ENCODE measurements at regions of chr3 and their contacts with region 1.

Region 1: DNA sequence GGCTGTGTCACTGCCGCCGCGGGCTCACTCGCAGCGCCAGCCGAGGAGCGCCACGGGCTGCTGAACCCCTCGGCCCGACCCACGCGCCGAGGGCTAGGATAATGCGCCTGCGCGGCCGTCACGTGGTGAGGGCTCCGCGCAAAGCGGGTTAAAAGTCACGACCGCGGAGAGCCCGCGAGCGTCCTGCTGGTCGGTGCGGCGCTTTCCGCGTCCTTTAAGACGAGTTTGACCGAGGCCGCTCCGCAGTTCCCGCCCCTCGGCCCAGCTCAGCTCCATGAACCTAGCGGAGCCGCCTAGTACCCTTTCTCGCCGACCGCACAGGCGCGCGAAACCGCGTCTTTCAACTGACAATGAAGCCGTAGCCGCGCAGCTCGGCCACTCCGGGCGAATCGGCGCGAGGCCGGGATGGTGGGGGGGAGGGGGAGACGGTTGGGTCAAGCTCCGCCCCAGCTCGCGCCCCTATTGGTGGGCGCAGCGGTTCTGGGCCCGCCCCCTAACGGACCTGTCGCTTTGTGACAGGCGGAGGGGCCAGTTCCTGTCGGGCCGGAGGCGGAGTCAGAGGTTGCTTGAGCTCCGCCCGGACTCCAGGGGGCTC is 636 bp upstream of the STT3B start:
- DNase-seq: peak; percentile 98
- H3K4me3 ChIP-seq: peak overlapping the region; percentile 9 to 84
- H3K4me3 Mint-ChIP-seq: peak overlapping the region in 7 of 8 donors; percentile 92 to 99 (median 98)
- H3K27ac ChIP-seq: peak overlapping the region; percentile 88
- H3K27ac Mint-ChIP-seq: peak overlapping the region in 6 of 7 donors; percentile 97 to 99 (median 98)
- H3K4me1 ChIP-seq: peaks cover 31% of the 10 kb centered on the region
- H3K4me1 Mint-ChIP-seq: peaks cover 9 to 33% (median 16%) of the 10 kb centered on the region in 4 donors
- H3K27me3 ChIP-seq: no peaks in the 10 kb centered on the region
- H3K27me3 Mint-ChIP-seq: no peaks in the 10 kb centered on the region

Region 2: GRCh38 chr3:30606301-30607031 is 925.6 kb before region 1 on chr3 and contains the start of gene TGFBR2:
- CTCF ChIA-PET with region 1: no interaction called
- POLR2A ChIA-PET with region 1: interaction called, 15 read pairs
- intact Hi-C with region 1: loop called (anchors 2 kb)
- DNase-seq: peak; percentile 67 to 90 (median 69)
- H3K4me3 ChIP-seq: peak within 1 kb of the TSS; percentile 82 to 89
- H3K4me3 Mint-ChIP-seq: peak within 1 kb of the TSS; percentile 97 to 99 (median 99)
- H3K27ac ChIP-seq: peak within 1 kb of the TSS; percentile 85
- H3K27ac Mint-ChIP-seq: peak within 1 kb of the TSS; percentile 92 to 99 (median 98)
- H3K4me1 ChIP-seq: peaks cover 57% of the 10 kb centered on the region
- H3K4me1 Mint-ChIP-seq: peaks cover 43 to 67% (median 48%) of the 10 kb centered on the region in 4 donors
- H3K27me3 ChIP-seq: no peaks in the 10 kb centered on the region
- H3K27me3 Mint-ChIP-seq: no peaks in the 10 kb centered on the region
- total RNA-seq, gene TGFBR2: 110 TPM

Region 3: GRCh38 chr3:30970183-30970582 is 561.9 kb before region 1 on chr3:
- CTCF ChIA-PET with region 1: no interaction called
- POLR2A ChIA-PET with region 1: no interaction called
- intact Hi-C with region 1: loop called (anchors 10 kb)
- DNase-seq: peak in 4 of 5 donors; percentile 6 to 23 (median 20)
- H3K4me3 ChIP-seq: no peak overlapping the region
- H3K4me3 Mint-ChIP-seq: no peak overlapping the region
- H3K27ac ChIP-seq: no peak overlapping the region
- H3K27ac Mint-ChIP-seq: no peak overlapping the region
- H3K4me1 ChIP-seq: no peaks in the 10 kb centered on the region
- H3K4me1 Mint-ChIP-seq: peaks cover 2 to 7% (median 5%) of the 10 kb centered on the region in 4 donors
- H3K27me3 ChIP-seq: no peaks in the 10 kb centered on the region
- H3K27me3 Mint-ChIP-seq: peaks cover 2 to 5% of the 10 kb centered on the region in 2 donors

Region 4: GRCh38 chr3:31232055-31233025 is 299.7 kb before region 1 on chr3:
- CTCF ChIA-PET with region 1: interaction called, 22 read pairs
- POLR2A ChIA-PET with region 1: interaction called, 181 read pairs
- intact Hi-C with region 1: no loop called
- DNase-seq: no peak
- H3K4me3 ChIP-seq: no peak overlapping the region
- H3K4me3 Mint-ChIP-seq: peak overlapping the region in 7 of 8 donors; percentile 2 to 77 (median 54)
- H3K27ac ChIP-seq: no peak overlapping the region
- H3K27ac Mint-ChIP-seq: peak overlapping the region; percentile 72 to 92 (median 83)
- H3K4me1 ChIP-seq: peaks cover 80% of the 10 kb centered on the region
- H3K4me1 Mint-ChIP-seq: peaks cover 62 to 85% (median 74%) of the 10 kb centered on the region in 4 donors
- H3K27me3 ChIP-seq: no peaks in the 10 kb centered on the region
- H3K27me3 Mint-ChIP-seq: no peaks in the 10 kb centered on the region

Region 5: GRCh38 chr3:31503456-31503855 is 28.6 kb before region 1 on chr3:
- CTCF ChIA-PET with region 1: interaction called, 5 read pairs
- POLR2A ChIA-PET with region 1: interaction called, 15 read pairs
- intact Hi-C with region 1: no loop called
- DNase-seq: no peak
- H3K4me3 ChIP-seq: no peak overlapping the region
- H3K4me3 Mint-ChIP-seq: no peak overlapping the region
- H3K27ac ChIP-seq: no peak overlapping the region
- H3K27ac Mint-ChIP-seq: no peak overlapping the region
- H3K4me1 ChIP-seq: peaks cover 42% of the 10 kb centered on the region
- H3K4me1 Mint-ChIP-seq: peaks cover 34 to 54% (median 39%) of the 10 kb centered on the region in 4 donors
- H3K27me3 ChIP-seq: no peaks in the 10 kb centered on the region
- H3K27me3 Mint-ChIP-seq: no peaks in the 10 kb centered on the region

Region 6: GRCh38 chr3:31567036-31567435 is 34.9 kb after region 1 on chr3:
- CTCF ChIA-PET with region 1: interaction called, 7 read pairs
- POLR2A ChIA-PET with region 1: interaction called, 14 read pairs
- intact Hi-C with region 1: no loop called
- DNase-seq: peak in 3 of 5 donors; percentile 19 to 43 (median 25)
- H3K4me3 ChIP-seq: no peak overlapping the region
- H3K4me3 Mint-ChIP-seq: peak overlapping the region in 7 of 8 donors; percentile 1 to 72 (median 54)
- H3K27ac ChIP-seq: no peak overlapping the region
- H3K27ac Mint-ChIP-seq: peak overlapping the region in 4 of 7 donors; percentile 11 to 61 (median 38)
- H3K4me1 ChIP-seq: peaks cover 92% of the 10 kb centered on the region
- H3K4me1 Mint-ChIP-seq: peaks cover 72 to 90% (median 83%) of the 10 kb centered on the region in 4 donors
- H3K27me3 ChIP-seq: no peaks in the 10 kb centered on the region
- H3K27me3 Mint-ChIP-seq: no peaks in the 10 kb centered on the region

Region 7: GRCh38 chr3:31858439-31858838 is 326.4 kb after region 1 on chr3:
- CTCF ChIA-PET with region 1: no interaction called
- POLR2A ChIA-PET with region 1: no interaction called
- intact Hi-C with region 1: no loop called
- DNase-seq: no peak
- H3K4me3 ChIP-seq: no peak overlapping the region
- H3K4me3 Mint-ChIP-seq: no peak overlapping the region
- H3K27ac ChIP-seq: no peak overlapping the region
- H3K27ac Mint-ChIP-seq: no peak overlapping the region
- H3K4me1 ChIP-seq: no peaks in the 10 kb centered on the region
- H3K4me1 Mint-ChIP-seq: no peaks in the 10 kb centered on the region
- H3K27me3 ChIP-seq: no peaks in the 10 kb centered on the region
- H3K27me3 Mint-ChIP-seq: peaks cover 0 to 14% of the 10 kb centered on the region in 2 donors

Region 8: DNA sequence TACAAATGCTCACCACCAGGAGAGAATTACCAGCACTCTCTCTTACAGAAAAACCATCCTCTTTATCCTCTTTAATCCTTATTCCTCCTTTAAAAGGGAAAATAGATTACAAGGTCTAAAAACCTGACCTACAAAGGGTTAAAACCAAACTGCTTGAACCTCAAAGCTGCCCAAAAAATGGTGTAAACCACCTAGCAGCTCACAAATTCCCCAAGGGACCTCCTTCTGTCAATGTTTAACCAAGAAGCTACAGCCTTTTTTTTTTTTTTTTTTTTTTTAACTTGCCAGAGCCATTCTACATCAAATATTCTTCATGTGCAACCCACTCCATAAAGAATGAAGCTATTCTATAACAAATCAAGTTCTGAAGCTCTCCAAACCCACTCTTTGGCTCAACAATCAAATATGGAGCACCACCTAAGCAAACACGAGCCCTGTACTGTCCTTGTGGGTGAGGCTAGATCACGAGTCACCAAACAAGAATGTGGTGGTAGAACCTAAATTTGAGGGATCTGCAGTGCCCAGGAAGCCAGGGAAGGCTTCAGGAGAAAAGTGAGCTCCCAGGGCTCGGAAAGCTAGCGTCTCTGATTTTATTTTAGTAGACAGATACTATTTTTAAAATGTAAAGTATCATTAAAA is 428.8 kb after region 1 on chr3:
- CTCF ChIA-PET with region 1: no interaction called
- POLR2A ChIA-PET with region 1: no interaction called
- intact Hi-C with region 1: no loop called
- DNase-seq: no peak
- H3K4me3 ChIP-seq: no peak overlapping the region
- H3K4me3 Mint-ChIP-seq: no peak overlapping the region
- H3K27ac ChIP-seq: no peak overlapping the region
- H3K27ac Mint-ChIP-seq: no peak overlapping the region
- H3K4me1 ChIP-seq: no peaks in the 10 kb centered on the region
- H3K4me1 Mint-ChIP-seq: peaks cover 0 to 1% (median 0%) of the 10 kb centered on the region in 4 donors
- H3K27me3 ChIP-seq: no peaks in the 10 kb centered on the region
- H3K27me3 Mint-ChIP-seq: peaks cover 4 to 5% of the 10 kb centered on the region in 2 donors

Region 9: GRCh38 chr3:32113566-32113965 is 581.5 kb after region 1 on chr3:
- CTCF ChIA-PET with region 1: no interaction called
- POLR2A ChIA-PET with region 1: interaction called, 9 read pairs
- intact Hi-C with region 1: loop called (anchors 2 kb)
- DNase-seq: no peak
- H3K4me3 ChIP-seq: peak overlapping the region in 1 of 2 donors; percentile 32
- H3K4me3 Mint-ChIP-seq: peak overlapping the region in 6 of 8 donors; percentile 84 to 92 (median 87)
- H3K27ac ChIP-seq: peak overlapping the region; percentile 57
- H3K27ac Mint-ChIP-seq: peak overlapping the region; percentile 94 to 99 (median 95)
- H3K4me1 ChIP-seq: peaks cover 66% of the 10 kb centered on the region
- H3K4me1 Mint-ChIP-seq: peaks cover 50 to 89% (median 68%) of the 10 kb centered on the region in 4 donors
- H3K27me3 ChIP-seq: no peaks in the 10 kb centered on the region
- H3K27me3 Mint-ChIP-seq: no peaks in the 10 kb centered on the region

Measured in CD4-positive, alpha-beta memory T cell (primary cell).